ENCODE measurements at regions of chr1 and their contacts with region 1.

Region 1: DNA sequence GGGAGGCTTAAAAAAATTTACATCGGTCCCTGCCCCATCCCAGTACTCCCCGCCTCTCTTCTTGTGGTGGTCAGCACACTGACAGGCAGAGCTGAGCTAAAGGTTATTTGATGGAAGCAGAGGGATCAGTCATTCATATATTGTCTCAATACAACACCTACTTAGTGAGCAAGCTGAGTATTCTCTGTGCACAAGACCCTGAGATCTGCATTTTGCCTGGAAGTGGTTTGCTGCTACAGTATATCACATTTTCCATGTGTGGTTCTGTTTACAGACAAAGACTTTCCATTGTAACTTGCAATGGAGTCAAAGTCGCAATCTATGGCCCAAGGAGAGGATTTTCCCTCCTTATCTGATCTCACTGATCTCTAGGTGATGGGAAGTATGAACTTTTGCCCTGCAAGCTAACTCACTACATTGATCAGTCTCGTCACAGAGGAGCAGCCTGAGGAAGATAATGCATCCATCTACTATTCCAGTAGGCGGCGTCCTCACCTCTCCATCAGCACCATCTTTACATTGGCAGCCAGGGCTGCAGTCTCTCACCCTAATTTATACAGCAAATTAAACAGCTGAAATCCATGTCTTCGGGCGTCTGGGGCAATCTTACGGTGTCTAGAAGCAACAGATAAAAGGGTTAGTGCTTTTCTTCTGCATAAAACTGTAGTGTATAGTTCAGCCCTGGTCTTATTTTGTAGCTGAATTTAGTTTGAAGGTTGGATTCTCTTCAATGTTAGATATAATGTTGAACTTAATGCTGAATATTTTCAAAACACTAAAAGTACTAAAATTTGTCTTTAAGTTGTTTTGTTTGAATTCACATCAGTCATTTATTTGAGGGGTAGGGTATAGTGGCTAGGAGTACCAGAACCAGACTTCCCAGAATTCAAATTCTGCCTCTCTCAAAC is 3.2 kb upstream of the TRAF5 start:
- DNase-seq: no peak
- ATAC-seq: no peak

Region 2: DNA sequence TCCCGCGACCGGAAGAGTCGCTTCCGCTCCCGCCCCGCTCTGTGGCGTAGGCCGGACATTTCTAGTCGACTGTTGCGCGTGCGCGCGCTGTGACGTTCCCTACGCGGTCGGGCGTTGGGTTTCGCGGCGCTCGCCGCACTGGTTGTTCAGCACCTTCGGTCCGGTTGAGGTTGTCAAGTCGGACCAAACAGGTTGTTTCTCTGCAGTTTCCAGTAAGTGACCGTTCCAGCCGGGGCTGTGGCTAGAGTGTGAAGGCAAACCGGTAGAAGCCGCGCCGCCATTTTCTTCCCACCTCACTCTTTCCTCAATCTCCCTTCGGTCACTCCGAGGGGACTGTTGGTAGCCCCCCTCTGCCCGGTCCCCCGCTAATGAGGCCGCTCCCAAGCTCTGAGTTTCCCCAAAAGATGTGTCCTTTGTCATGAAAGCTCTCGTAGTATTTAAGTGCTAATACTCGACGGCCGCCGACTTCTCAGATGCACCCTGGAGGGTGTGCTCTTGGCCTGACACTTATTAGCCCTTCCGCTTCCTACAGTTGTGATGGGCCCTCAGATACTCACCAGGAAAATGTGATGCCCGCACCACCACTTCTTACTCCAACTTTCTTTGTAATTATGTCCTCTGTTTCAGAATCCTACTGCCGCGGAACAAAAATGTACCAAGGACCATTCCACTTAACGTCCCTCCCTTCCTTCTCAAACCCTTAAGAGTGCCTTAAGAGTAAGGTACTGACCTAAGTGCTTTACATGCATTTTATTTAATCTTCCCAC is 59.5 kb after region 1 on chr1:
- intact Hi-C with region 1: loop called (anchors 5 kb)
- DNase-seq: peak; percentile 98
- ATAC-seq: peak; percentile 100

Region 3: GRCh38 chr1:211476200-211476849 is 152.9 kb after region 1 on chr1:
- intact Hi-C with region 1: loop called (anchors 10 kb)
- DNase-seq: no peak
- ATAC-seq: no peak

Region 4: DNA sequence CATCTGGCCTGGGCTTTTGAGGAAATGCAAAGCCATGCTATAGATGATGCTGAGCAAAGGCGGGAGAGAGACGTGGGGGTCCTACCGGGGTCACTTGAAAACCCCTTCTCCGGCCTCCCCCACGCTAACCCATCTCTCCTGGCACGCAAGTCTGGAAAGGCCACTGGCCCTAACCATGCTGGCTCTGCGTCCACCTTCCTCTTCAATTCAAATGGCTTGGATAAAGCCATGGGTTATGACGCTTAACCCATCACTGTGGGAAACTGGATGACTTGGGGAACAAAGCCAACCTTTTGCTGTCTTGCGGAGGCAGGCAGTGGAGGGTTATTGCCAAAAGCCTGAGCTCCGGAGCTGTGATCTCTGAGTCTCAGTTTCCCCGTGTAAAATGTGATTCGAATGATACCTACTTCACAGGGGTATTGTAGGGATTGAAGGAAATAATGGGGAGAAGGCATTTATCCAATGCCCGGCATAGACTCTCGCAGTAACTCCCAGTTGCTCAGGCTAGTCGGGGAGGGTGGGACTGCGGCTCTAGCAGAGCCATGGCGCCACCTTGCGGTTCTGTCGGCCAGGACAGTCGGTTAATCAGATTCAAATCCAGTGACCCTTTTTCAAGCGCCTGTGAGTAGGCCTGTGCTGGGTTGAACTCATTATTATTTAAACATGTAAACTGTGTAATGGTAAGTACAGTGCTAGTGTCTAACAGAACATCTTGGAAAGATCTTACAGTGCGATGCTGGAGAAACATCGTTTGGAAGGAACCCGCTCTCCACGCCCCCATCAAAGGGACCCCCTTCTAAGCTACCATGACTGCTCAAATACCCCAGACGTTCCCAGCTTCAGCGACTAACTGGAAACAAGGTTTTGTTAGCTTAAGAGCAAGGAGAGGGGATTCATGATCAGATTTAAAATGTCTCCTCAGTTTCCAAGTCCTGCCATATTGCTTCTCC is 331.7 kb after region 1 on chr1:
- intact Hi-C with region 1: loop called (anchors 5 kb)
- DNase-seq: peak; percentile 93
- ATAC-seq: peak; percentile 95

Measured in Right ventricle myocardium inferior (tissue), 1 donor.